ENCODE measurements at regions of chr15 and their contacts with region 1.

Region 1: GRCh38 chr15:71114896-71115554 is at the start of gene THSD4:
- DNase-seq: peak; percentile 77
- H3K4me3 ChIP-seq: peak within 1 kb of the TSS; percentile 9 to 53 (median 44)
- H3K27ac ChIP-seq: peak within 1 kb of the TSS in 1 of 4 donors; percentile 31
- H3K4me1 ChIP-seq: peaks cover 0 to 7% (median 6%) of the 10 kb centered on the region in 4 donors
- H3K27me3 ChIP-seq: peaks cover 0 to 20% (median 0%) of the 10 kb centered on the region in 3 donors
- CTCF ChIP-seq: peak; percentile 78 to 97 (median 93)
- EP300 ChIP-seq: no peak
- POLR2A ChIP-seq: no peak
- total RNA-seq, gene THSD4: 1.4 to 2.2 (median 2.0) TPM

Region 2: GRCh38 chr15:71443538-71443937 is 328.5 kb after region 1 on chr15:
- intact Hi-C with region 1: loop called (anchors 1 kb)
- DNase-seq: no peak
- H3K4me3 ChIP-seq: no peak overlapping the region
- H3K27ac ChIP-seq: no peak overlapping the region
- H3K4me1 ChIP-seq: no peaks in the 10 kb centered on the region
- H3K27me3 ChIP-seq: no peaks in the 10 kb centered on the region
- CTCF ChIP-seq: peak; percentile 35 to 90 (median 82)
- EP300 ChIP-seq: no peak
- POLR2A ChIP-seq: no peak